Activated CD4-positive, alpha-beta T cell treated with anti-CD3 and anti-CD28 coated beads for 36 hours (primary cell): ENCODE measurements at regions of chr4 and their contacts with region 1.

Region 1: DNA sequence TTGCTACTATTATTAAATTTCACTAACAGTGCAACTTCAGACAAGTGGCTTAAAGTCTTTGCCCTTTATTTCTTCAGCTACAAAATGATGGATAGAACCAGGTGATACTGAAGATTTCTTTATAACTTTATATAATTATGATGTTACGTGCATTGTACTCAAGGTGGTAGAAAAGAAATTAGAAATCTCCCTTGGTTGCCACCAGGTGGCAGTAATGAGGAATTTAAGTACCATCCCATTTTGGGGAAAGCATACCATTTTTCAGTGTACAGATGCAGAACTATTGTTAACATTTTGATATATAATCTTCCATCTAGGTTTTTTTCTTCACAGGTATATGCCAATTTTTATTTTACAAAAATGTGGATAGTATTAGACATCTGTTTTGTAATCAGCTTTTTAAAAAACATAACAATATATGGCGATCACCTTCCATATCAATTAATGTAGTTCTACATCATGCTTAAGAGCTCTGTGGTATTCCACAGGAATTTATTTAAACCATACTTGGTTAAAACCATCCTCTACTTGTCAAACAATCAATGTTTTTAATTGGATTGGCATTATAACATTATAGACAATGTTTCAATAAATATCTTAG is 37.7 kb upstream of the RAB33B start:
- DNase-seq: peak; percentile 18
- ATAC-seq: no peak
- H3K4me3 Mint-ChIP-seq: no peak overlapping the region
- H3K27ac Mint-ChIP-seq: no peak overlapping the region
- H3K4me1 Mint-ChIP-seq: peaks cover 12% of the 10 kb centered on the region
- H3K27me3 Mint-ChIP-seq: no peaks in the 10 kb centered on the region

Region 2: GRCh38 chr4:139530833-139531427 is 114.8 kb after region 1 on chr4:
- CTCF ChIA-PET with region 1: interaction called, 3 read pairs
- POLR2A ChIA-PET with region 1: no interaction called
- intact Hi-C with region 1: loop called (anchors 1 kb)
- DNase-seq: peak; percentile 71
- ATAC-seq: peak; percentile 68
- H3K4me3 Mint-ChIP-seq: no peak overlapping the region
- H3K27ac Mint-ChIP-seq: no peak overlapping the region
- H3K4me1 Mint-ChIP-seq: no peaks in the 10 kb centered on the region
- H3K27me3 Mint-ChIP-seq: no peaks in the 10 kb centered on the region

Region 3: GRCh38 chr4:140116442-140117104 is 700.4 kb after region 1 on chr4:
- CTCF ChIA-PET with region 1: no interaction called
- POLR2A ChIA-PET with region 1: no interaction called
- intact Hi-C with region 1: no loop called
- DNase-seq: peak; percentile 58
- ATAC-seq: peak; percentile 99
- H3K4me3 Mint-ChIP-seq: no peak overlapping the region
- H3K27ac Mint-ChIP-seq: peak overlapping the region; percentile 72
- H3K4me1 Mint-ChIP-seq: peaks cover 25% of the 10 kb centered on the region
- H3K27me3 Mint-ChIP-seq: no peaks in the 10 kb centered on the region